HCT116 (cell line): ENCODE measurements at regions of chr11 and their contacts with region 1.

Region 1: GRCh38 chr11:62025487-62026105 is 58.2 kb upstream of the FTH1 start:
- DNase-seq: peak; percentile 82
- ATAC-seq: peak; percentile 80
- H3K4me3 ChIP-seq: peak overlapping the region; percentile 8 to 24
- H3K27ac ChIP-seq: peak overlapping the region; percentile 41
- H3K4me1 ChIP-seq: peaks cover 16 to 30% of the 10 kb centered on the region in 2 experiments
- H3K27me3 ChIP-seq: no peaks in the 10 kb centered on the region
- CTCF ChIP-seq: no peak
- POLR2A ChIP-seq: no peak
- RAD21 ChIP-seq: peak; percentile 31; the same call in 1 of the 2 replicates

Region 2: DNA sequence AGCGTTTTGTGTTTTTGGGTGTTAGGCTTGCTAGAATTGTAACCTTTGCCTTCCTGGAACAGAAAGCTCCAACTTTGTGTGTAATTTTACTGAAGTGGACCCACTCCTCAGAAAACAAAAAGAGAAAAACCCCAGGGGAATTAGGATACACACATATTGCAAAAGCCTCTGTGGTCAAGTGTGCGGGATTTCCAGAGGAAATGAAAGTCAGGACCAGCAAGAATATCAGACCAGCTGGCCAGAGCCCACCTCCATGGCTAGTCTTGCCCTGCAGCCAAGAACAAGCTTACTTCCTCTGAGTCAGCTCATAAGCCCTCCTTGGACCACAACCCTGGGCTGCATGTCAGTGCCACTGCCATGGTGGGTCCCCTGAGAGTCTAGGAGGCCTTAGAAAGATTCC is 21.1 kb before region 1 on chr11:
- CTCF ChIA-PET with region 1: no interaction called
- POLR2A ChIA-PET with region 1: no interaction called
- RAD21 ChIA-PET with region 1: no interaction called
- intact Hi-C with region 1: no loop called
- DNase-seq: no peak
- ATAC-seq: no peak
- H3K4me3 ChIP-seq: no peak overlapping the region
- H3K27ac ChIP-seq: no peak overlapping the region
- H3K4me1 ChIP-seq: peaks cover 3 to 10% of the 10 kb centered on the region in 2 experiments; a peak in 3 of 4 replicates
- H3K27me3 ChIP-seq: no peaks in the 10 kb centered on the region
- CTCF ChIP-seq: no peak
- POLR2A ChIP-seq: no peak
- RAD21 ChIP-seq: no peak

Region 3: GRCh38 chr11:62048065-62048464 is 22.5 kb after region 1 on chr11:
- CTCF ChIA-PET with region 1: no interaction called
- POLR2A ChIA-PET with region 1: interaction called, 3 read pairs
- RAD21 ChIA-PET with region 1: no interaction called
- intact Hi-C with region 1: loop called (anchors 2 kb)
- DNase-seq: no peak
- ATAC-seq: no peak
- H3K4me3 ChIP-seq: no peak overlapping the region
- H3K27ac ChIP-seq: no peak overlapping the region
- H3K4me1 ChIP-seq: peaks cover 56 to 69% of the 10 kb centered on the region in 2 experiments
- H3K27me3 ChIP-seq: no peaks in the 10 kb centered on the region
- CTCF ChIP-seq: no peak
- POLR2A ChIP-seq: no peak
- RAD21 ChIP-seq: no peak